ENCODE measurements at regions of chr14 and their contacts with region 1.

Region 1: GRCh38 chr14:102579696-102580334 is 12.6 kb upstream of the RCOR1 start:
- DNase-seq: no peak
- H3K4me3 ChIP-seq: no peak overlapping the region
- H3K27ac ChIP-seq: no peak overlapping the region
- H3K4me1 ChIP-seq: no peaks in the 10 kb centered on the region
- H3K27me3 ChIP-seq: no peaks in the 10 kb centered on the region
- CTCF ChIP-seq: no peak
- POLR2A ChIP-seq: no peak

Region 2: DNA sequence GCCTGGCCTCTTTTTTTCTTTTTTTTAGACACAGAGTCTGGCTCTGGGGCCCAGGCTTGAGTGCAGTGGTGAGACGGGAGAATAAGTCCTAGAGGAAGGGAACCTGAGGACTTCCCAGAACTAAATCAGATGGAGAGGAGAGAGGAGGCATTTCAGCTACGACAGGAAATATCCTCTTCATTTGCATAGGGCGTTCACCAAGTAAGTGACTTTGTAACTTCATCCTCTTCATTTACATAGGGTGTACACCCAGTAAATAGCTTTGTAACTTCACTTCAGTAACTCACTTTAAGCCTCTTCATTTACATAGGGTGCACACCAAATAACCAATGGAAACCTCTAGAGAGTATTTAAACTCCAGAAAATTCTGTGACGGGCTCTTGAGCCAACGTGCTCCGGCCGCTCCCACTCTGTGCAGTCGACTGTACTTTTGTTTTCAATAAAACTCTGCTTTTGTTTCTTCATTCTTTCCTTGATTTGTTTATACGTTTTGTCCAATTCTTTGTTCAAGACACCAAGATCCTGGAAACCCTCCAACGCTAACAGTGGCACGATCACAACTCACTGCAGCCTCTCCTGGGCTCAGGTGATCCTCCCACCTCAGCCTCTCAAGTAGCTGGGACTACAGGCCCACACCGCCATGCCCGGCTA is 48.9 kb before region 1 on chr14:
- intact Hi-C with region 1: loop called in 1 of 2 experiments (anchors 5 kb)
- DNase-seq: no peak
- H3K4me3 ChIP-seq: no peak overlapping the region
- H3K27ac ChIP-seq: no peak overlapping the region
- H3K4me1 ChIP-seq: no peaks in the 10 kb centered on the region
- H3K27me3 ChIP-seq: no peaks in the 10 kb centered on the region
- CTCF ChIP-seq: no peak
- POLR2A ChIP-seq: no peak

Measured in adrenal gland (tissue), 19 donors.